ENCODE measurements at regions of chr3 and their contacts with region 1.

Region 1: DNA sequence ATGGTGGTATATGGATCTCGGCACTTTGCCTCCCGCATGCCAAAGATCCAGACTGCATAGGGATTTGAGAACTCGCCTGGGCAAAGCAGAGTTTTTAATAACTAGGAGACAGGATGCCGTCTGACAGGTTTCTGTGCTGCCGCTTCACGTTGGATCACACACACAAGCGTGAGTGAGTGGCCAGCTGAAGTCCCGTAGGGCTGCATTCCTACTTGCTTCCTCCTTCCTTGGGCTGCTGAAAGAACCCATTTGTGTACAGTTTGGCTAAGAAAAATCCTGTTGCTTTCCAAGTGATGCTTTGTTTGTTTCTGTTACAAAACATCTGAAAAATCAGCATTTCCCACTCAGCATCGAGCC is 604.3 kb upstream of the CFAP20DC start:
- DNase-seq: no peak
- H3K4me3 Mint-ChIP-seq: no peak overlapping the region
- H3K27ac Mint-ChIP-seq: no peak overlapping the region
- H3K4me1 Mint-ChIP-seq: no peaks in the 10 kb centered on the region
- H3K27me3 Mint-ChIP-seq: no peaks in the 10 kb centered on the region

Region 2: DNA sequence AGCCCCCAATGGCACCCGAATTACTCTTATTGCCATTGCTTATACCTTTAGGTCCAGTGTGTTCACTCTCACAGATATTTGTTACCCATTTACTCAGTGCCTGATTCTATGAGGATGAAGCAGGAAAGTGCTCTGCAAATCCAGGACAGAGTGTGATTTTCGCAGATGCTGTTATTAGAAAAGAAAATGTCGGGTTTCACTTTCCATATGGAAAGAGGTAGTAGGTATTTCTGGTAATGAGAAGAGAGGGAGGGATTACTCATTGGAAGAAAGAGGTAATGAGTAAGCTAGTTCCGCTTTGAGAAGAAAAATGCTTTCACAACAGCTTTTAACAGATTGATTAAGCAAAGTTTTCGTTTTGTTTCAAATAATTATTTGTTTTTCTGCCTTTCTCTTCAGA is 267.9 kb before region 1 on chr3:
- intact Hi-C with region 1: no loop called
- DNase-seq: no peak
- H3K4me3 Mint-ChIP-seq: peak overlapping the region; percentile 32
- H3K27ac Mint-ChIP-seq: peak overlapping the region; percentile 97
- H3K4me1 Mint-ChIP-seq: peaks cover 91% of the 10 kb centered on the region
- H3K27me3 Mint-ChIP-seq: no peaks in the 10 kb centered on the region

Region 3: GRCh38 chr3:59510576-59510975 is 143.5 kb before region 1 on chr3:
- intact Hi-C with region 1: no loop called
- DNase-seq: no peak
- H3K4me3 Mint-ChIP-seq: no peak overlapping the region
- H3K27ac Mint-ChIP-seq: no peak overlapping the region
- H3K4me1 Mint-ChIP-seq: no peaks in the 10 kb centered on the region
- H3K27me3 Mint-ChIP-seq: peaks cover 8% of the 10 kb centered on the region

Region 4: GRCh38 chr3:59675495-59675894 is 21.4 kb after region 1 on chr3:
- intact Hi-C with region 1: loop called (anchors 2 kb)
- DNase-seq: no peak
- H3K4me3 Mint-ChIP-seq: no peak overlapping the region
- H3K27ac Mint-ChIP-seq: no peak overlapping the region
- H3K4me1 Mint-ChIP-seq: no peaks in the 10 kb centered on the region
- H3K27me3 Mint-ChIP-seq: no peaks in the 10 kb centered on the region

Region 5: GRCh38 chr3:59908280-59908679 is 254.2 kb after region 1 on chr3:
- intact Hi-C with region 1: no loop called
- DNase-seq: no peak
- H3K4me3 Mint-ChIP-seq: no peak overlapping the region
- H3K27ac Mint-ChIP-seq: no peak overlapping the region
- H3K4me1 Mint-ChIP-seq: no peaks in the 10 kb centered on the region
- H3K27me3 Mint-ChIP-seq: no peaks in the 10 kb centered on the region

Measured in activated T-helper 1 cell treated with anti-CD3 and anti-CD28 coated beads, Interleukin-12 subunit alpha, Interleukin-12 subunit beta, Interleukin-2, Interleukin-4 antibody, amounts not matched to agents 30 ng/mL and 10 ng/mL and 1 ng/mL, durations not matched to agents 14 hours and 24 hours and 36 hours (primary cell).